Astrocyte of the cerebellum (primary cell): ENCODE measurements at regions of chr13 and their contacts with region 1.

Region 1: DNA sequence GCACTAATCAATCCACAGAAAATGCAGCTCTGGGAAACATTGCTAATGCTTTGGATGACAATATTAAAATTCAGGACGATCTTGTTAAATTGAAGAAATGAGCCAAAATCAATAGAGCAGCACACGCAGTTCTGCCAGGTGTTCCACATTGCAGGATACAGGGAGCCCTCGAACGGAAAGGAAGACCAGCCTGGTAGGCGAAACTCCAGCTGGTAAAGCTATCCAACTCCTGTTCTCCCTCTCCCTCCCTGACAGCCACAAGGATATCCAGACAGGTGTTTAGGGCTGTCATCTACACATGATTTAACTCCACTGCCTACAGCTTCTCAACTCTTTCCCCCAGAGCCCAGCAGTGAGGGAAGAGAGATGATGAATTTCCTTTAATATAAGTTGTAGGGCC is 67.7 kb downstream of the EPSTI1 start:
- DNase-seq: no peak
- H3K4me3 ChIP-seq: no peak overlapping the region
- CTCF ChIP-seq: no peak

Region 2: DNA sequence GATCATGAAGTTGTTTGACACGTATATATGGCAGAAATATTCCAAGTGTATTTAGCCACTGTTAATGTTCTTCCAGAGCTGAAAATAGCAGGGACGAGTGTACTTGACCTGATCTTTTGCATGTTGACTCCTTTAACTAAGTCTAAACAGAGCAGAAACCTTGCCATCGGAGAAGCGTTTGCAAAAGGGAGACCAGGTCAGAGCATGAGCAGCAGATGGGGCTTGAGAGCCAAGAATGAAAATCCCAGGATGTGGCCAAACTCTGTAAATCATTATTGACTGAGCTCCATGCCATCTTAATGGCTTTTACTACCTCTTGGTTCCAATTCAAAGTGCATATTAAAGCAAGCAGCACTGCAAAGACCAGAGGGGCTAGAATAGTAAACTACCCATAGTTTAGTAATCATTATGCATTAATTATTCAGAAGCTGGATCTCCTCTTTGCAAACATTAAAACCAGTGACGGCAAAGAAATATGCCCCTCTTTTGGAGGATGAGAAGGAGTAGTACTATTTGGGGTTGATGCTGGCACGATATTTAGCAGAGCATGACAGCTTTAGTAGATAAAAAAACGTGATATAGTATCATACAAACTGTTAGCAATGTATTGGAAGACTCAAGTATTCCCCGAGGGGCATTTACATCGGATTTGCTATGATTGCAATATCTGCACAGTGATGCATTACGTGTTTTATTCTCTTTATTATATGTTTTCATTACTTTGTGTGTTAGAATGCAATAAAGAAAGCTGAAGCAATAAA is 87.2 kb before region 1 on chr13:
- in situ Hi-C with region 1: no loop called
- DNase-seq: no peak
- H3K4me3 ChIP-seq: no peak overlapping the region
- CTCF ChIP-seq: peak; percentile 56

Region 3: GRCh38 chr13:42985312-42986175 is 61.2 kb after region 1 on chr13:
- in situ Hi-C with region 1: loop called (anchors 10 kb)
- DNase-seq: no peak
- H3K4me3 ChIP-seq: no peak overlapping the region
- CTCF ChIP-seq: no peak